SK-N-SH (cell line): ENCODE measurements at regions of chr22 and their contacts with region 1.

Region 1: GRCh38 chr22:27937453-27937852 is 18.4 kb upstream of the PITPNB start:
- DNase-seq: peak; percentile 36
- H3K4me3 ChIP-seq: no peak overlapping the region
- H3K27ac ChIP-seq: no peak overlapping the region
- H3K4me1 ChIP-seq: no peaks in the 10 kb centered on the region
- H3K27me3 ChIP-seq: no peaks in the 10 kb centered on the region
- CTCF ChIP-seq: no peak
- EP300 ChIP-seq: no peak
- RAD21 ChIP-seq: peak; percentile 33; the same call in 1 of the 2 replicates

Region 2: GRCh38 chr22:27885977-27886842 is 51.2 kb before region 1 on chr22:
- CTCF ChIA-PET with region 1: interaction called, 17 read pairs
- POLR2A ChIA-PET with region 1: no interaction called
- DNase-seq: peak; percentile 52
- H3K4me3 ChIP-seq: no peak overlapping the region
- H3K27ac ChIP-seq: peak overlapping the region in 1 of 2 experiments; percentile 29; a peak in 3 of 4 replicates
- H3K4me1 ChIP-seq: peaks cover 9 to 27% of the 10 kb centered on the region in 2 experiments
- H3K27me3 ChIP-seq: no peaks in the 10 kb centered on the region
- CTCF ChIP-seq: peak; percentile 94
- EP300 ChIP-seq: no peak
- RAD21 ChIP-seq: peak; percentile 68